Activated CD8-positive, alpha-beta T cell treated with anti-CD3 and anti-CD28 coated beads, Interleukin-2, amount 10 ng/mL, durations not matched to agents 7 days and 5 days (primary cell): ENCODE measurements at regions of chr3 and their contacts with region 1.

Region 1: DNA sequence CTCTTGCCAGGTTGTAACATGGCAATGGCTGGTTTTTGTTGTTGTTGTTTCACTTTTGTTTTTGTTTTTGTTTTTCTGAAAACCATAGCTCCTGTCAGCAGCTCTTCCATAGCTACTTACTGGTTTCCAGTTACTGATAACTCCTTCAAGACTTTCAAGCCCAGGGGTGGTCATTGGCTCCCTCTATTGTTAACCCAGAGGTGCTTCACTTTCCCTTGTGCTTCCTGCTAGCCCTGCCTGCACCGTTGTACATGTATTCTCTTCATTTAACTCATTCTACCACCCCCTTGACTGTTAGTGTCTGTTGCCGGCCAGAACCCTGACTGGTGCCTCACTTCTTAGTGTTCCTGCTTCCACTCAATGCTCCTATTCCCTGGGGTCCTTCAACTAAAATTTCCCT is 4.2 kb upstream of the TRAT1 start:
- DNase-seq: peak; percentile 80
- ATAC-seq: peak; percentile 92
- H3K4me3 Mint-ChIP-seq: no peak overlapping the region
- H3K27ac Mint-ChIP-seq: peak overlapping the region; percentile 54
- H3K4me1 Mint-ChIP-seq: peaks cover 34% of the 10 kb centered on the region
- H3K27me3 Mint-ChIP-seq: no peaks in the 10 kb centered on the region

Region 2: DNA sequence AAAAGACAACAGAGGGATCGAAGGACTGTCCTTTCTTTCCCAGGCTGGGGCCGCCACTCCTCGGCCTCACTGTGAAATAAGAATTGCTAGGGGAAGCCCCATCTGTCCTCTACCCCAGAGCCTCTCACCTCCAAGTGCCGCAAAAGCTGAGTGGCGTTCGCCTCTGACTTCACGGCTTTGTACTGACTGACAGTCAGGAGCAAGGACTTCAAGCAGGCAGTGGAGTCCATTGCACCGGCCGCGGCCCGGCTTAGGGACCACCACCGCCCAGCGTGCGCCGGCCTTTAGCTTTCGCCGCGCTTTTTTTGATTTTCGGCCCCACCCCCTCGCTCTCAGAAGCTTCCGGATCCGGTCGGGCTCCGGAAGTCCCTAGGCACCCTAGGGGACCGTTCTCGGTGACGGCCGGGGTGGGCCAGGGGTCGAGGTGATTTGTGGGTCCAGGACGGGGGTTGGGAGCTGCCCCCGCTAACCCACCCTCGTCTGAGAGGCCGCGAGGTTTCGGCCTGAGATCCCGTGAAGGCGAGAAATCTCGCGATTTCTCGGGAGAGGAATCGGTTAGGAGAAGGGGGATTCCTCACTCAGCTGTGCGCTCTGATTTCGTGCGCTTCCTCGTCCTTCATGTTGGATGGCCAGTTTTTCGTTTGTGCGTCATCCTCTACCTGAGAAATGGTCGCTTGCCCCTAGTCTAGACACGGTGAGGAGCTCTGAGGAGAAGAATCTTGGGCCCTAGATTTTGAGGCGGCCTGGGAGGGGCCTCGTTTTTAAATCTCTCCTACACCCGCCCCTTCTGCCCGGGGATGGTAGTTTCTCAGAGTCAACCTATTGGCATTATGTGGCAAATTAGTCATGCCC is 229.0 kb before region 1 on chr3 and contains the starts of genes CIP2A and DZIP3:
- CTCF ChIA-PET with region 1: interaction called, 8 read pairs
- POLR2A ChIA-PET with region 1: interaction called, 14 read pairs
- DNase-seq: peak; percentile 92
- ATAC-seq: peak; percentile 93
- H3K4me3 Mint-ChIP-seq: peak within 1 kb of the TSS; percentile 100
- H3K27ac Mint-ChIP-seq: peak within 1 kb of the TSS; percentile 99
- H3K4me1 Mint-ChIP-seq: peaks cover 45% of the 10 kb centered on the region
- H3K27me3 Mint-ChIP-seq: no peaks in the 10 kb centered on the region
- total RNA-seq, gene CIP2A: 58.5 to 64.3 TPM
- total RNA-seq, gene DZIP3: 20.5 to 20.8 TPM

Region 3: DNA sequence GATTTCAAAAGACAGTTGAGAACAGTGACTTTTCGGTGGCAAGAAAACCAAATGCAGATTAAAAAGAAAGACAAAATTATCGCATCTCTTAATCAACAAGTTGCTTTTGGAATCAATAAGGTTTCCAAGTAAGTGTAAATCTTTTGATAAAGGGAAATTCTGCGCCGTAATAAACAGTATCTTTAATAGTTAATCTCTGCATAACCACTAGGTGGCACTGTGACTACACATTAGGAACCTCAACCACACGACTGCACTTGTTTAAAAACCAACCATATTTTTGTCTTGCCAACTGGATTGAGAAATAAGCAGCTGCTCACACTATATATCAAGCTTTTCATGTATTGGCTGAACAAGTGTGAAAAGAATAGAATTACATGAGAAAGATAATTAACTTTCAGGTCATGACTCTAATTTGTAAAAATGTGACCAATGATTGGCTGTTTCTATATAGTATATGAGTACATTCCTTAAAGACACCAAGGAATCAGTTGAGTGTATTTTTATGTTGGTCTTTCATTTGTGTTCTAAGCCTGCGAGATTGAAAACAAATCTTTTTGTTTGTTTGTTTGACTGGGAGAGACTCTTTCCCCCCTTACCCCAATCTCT is 156.2 kb before region 1 on chr3:
- CTCF ChIA-PET with region 1: interaction called, 134 read pairs
- POLR2A ChIA-PET with region 1: no interaction called
- DNase-seq: peak; percentile 67
- ATAC-seq: peak; percentile 72
- H3K4me3 Mint-ChIP-seq: no peak overlapping the region
- H3K27ac Mint-ChIP-seq: no peak overlapping the region
- H3K4me1 Mint-ChIP-seq: peaks cover 19% of the 10 kb centered on the region
- H3K27me3 Mint-ChIP-seq: no peaks in the 10 kb centered on the region

Region 4: DNA sequence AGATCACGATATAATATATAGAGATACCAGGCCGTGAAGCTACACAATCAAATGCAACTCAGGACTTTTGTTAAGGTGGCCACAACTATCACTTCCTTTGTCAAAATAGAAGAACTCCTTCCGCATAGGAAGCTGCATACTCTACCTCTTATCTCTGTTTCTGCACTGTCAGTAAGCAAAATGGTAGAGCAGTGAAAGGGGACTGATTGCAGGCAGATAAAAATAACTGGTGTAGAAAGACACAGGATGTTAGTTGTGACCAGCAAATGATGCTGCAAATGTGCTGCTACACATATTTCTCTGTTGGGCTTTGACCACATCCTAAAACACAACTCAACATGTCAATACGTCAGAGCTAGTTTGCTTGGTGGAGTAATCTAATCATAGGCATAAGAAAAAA is 12.1 kb before region 1 on chr3:
- CTCF ChIA-PET with region 1: interaction called, 38 read pairs
- POLR2A ChIA-PET with region 1: interaction called, 3 read pairs
- DNase-seq: peak; percentile 78
- ATAC-seq: peak; percentile 97
- H3K4me3 Mint-ChIP-seq: peak overlapping the region; percentile 38
- H3K27ac Mint-ChIP-seq: peak overlapping the region; percentile 90
- H3K4me1 Mint-ChIP-seq: peaks cover 32% of the 10 kb centered on the region
- H3K27me3 Mint-ChIP-seq: no peaks in the 10 kb centered on the region

Region 5: DNA sequence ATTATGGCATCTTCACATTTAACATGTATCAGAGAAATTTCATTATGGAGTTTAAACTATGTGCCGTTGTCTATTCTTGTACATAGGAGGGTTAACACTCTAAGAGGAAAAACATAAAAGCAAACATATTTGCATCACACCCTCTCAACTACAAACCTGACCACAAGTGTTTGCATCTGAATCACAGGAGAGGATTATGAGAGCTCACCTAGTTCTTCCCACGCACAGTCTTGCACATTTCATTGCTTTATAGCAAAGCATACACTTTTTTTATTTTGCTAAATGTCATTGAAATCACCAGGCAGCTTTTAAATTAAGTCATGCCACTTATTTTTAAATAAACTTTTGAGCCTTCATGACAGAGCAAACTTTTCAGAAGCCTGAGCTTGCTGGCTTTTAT is 16.7 kb after region 1 on chr3:
- CTCF ChIA-PET with region 1: interaction called, 66 read pairs
- POLR2A ChIA-PET with region 1: interaction called, 19 read pairs
- DNase-seq: peak; percentile 54
- ATAC-seq: peak; percentile 71
- H3K4me3 Mint-ChIP-seq: peak overlapping the region; percentile 53
- H3K27ac Mint-ChIP-seq: peak overlapping the region; percentile 77
- H3K4me1 Mint-ChIP-seq: peaks cover 82% of the 10 kb centered on the region
- H3K27me3 Mint-ChIP-seq: no peaks in the 10 kb centered on the region

Region 6: GRCh38 chr3:108887121-108887520 is 68.7 kb after region 1 on chr3:
- CTCF ChIA-PET with region 1: no interaction called
- POLR2A ChIA-PET with region 1: no interaction called
- DNase-seq: no peak
- ATAC-seq: no peak
- H3K4me3 Mint-ChIP-seq: no peak overlapping the region
- H3K27ac Mint-ChIP-seq: no peak overlapping the region
- H3K4me1 Mint-ChIP-seq: peaks cover 9% of the 10 kb centered on the region
- H3K27me3 Mint-ChIP-seq: no peaks in the 10 kb centered on the region